ENCODE measurements at regions of chr3 and their contacts with region 1.

Region 1: DNA sequence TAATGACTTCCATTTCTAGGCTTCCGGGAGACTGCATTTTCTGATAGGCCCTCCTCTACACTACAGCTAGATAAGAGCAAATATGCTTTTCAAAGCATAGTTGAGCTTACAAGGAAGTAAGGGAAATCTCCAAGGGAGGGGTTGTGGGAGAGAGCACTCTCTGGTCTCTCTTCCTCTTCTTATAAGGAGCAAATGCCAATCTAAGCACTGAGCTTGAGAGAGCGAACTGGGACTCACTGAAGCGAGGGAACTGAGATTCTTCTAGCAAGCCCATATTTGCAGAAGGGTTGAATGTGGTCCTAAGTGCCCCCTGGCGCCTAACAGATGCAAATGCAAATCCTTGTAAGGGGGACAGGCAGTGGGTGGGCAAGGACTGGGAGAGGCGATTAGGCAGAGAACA is 164.8 kb downstream of the ERC2 start:
- DNase-seq: peak; percentile 61 to 79
- H3K4me3 ChIP-seq: no peak overlapping the region
- H3K27ac ChIP-seq: no peak overlapping the region
- H3K4me1 ChIP-seq: peaks cover 1 to 13% (median 8%) of the 10 kb centered on the region in 4 experiments; a peak in 4 of 7 replicates
- H3K27me3 ChIP-seq: no peaks in the 10 kb centered on the region
- CTCF ChIP-seq: peak; percentile 65 to 81 (median 78)
- EP300 ChIP-seq: no peak
- POLR2A ChIP-seq: no peak
- RAD21 ChIP-seq: peak; percentile 75 to 84

Region 2: GRCh38 chr3:56089739-56090138 is 213.7 kb before region 1 on chr3:
- CTCF ChIA-PET with region 1: interaction called, 12 read pairs
- POLR2A ChIA-PET with region 1: no interaction called
- DNase-seq: no peak
- H3K4me3 ChIP-seq: no peak overlapping the region
- H3K27ac ChIP-seq: no peak overlapping the region
- H3K4me1 ChIP-seq: no peaks in the 10 kb centered on the region
- H3K27me3 ChIP-seq: no peaks in the 10 kb centered on the region
- CTCF ChIP-seq: peak in 2 of 3 experiments; percentile 23 to 32; a peak in 2 of 4 replicates
- EP300 ChIP-seq: no peak
- POLR2A ChIP-seq: no peak
- RAD21 ChIP-seq: peak; percentile 41 to 66

Region 3: DNA sequence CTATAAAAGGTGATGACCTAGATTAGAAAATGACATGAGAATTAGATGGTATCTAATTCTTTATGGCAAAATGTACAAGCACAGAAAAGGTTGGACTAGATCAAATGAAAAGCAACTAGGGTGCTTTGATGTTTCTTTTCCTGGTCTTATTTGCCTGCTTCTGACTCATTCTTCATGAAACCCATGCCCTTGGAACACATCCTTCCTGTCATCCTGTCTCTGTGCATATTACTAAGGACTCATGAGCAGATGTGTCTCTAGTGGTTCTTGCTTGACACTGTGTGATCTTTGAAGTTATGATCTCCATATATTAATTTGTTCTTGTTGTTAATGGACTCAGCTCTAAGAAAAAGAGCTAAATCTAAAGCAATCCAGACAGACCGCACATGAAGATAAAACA is 149.2 kb before region 1 on chr3:
- CTCF ChIA-PET with region 1: no interaction called
- POLR2A ChIA-PET with region 1: no interaction called
- DNase-seq: no peak
- H3K4me3 ChIP-seq: no peak overlapping the region
- H3K27ac ChIP-seq: no peak overlapping the region
- H3K4me1 ChIP-seq: peaks cover 0 to 7% (median 3%) of the 10 kb centered on the region in 4 experiments; a peak in 3 of 7 replicates
- H3K27me3 ChIP-seq: no peaks in the 10 kb centered on the region
- CTCF ChIP-seq: no peak
- EP300 ChIP-seq: no peak
- POLR2A ChIP-seq: no peak
- RAD21 ChIP-seq: no peak

Region 4: DNA sequence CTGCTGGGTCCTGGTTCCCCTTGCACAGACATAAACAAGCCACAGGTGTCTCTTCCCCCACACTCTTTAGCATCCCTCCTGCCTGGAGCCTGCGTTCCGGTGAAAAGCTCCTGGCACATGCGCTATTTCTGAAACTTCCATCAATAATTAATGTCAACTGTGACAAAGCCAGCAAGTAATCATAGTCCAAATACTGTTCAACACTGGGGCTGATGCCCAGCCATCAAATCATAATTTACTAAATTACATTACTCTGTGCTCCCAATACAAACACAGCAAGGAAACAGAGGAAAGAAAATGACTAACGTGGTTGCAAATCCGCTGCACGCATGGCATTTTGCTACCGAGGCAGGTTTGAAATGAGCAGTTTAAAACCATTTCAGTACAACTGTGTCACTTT is 129.9 kb before region 1 on chr3:
- CTCF ChIA-PET with region 1: no interaction called
- POLR2A ChIA-PET with region 1: no interaction called
- DNase-seq: no peak
- H3K4me3 ChIP-seq: no peak overlapping the region
- H3K27ac ChIP-seq: no peak overlapping the region
- H3K4me1 ChIP-seq: no peaks in the 10 kb centered on the region
- H3K27me3 ChIP-seq: no peaks in the 10 kb centered on the region
- CTCF ChIP-seq: no peak
- EP300 ChIP-seq: no peak
- POLR2A ChIP-seq: no peak
- RAD21 ChIP-seq: no peak

Region 5: GRCh38 chr3:56260262-56260661 is 43.2 kb before region 1 on chr3:
- CTCF ChIA-PET with region 1: interaction called, 44 read pairs
- POLR2A ChIA-PET with region 1: no interaction called
- DNase-seq: peak in 1 of 2 experiments; percentile 62
- H3K4me3 ChIP-seq: no peak overlapping the region
- H3K27ac ChIP-seq: no peak overlapping the region
- H3K4me1 ChIP-seq: peaks cover 0 to 4% (median 0%) of the 10 kb centered on the region in 4 experiments; a peak in 1 of 7 replicates
- H3K27me3 ChIP-seq: no peaks in the 10 kb centered on the region
- CTCF ChIP-seq: peak in 2 of 3 experiments; percentile 23 to 42; a peak in 3 of 4 replicates
- EP300 ChIP-seq: no peak
- POLR2A ChIP-seq: no peak
- RAD21 ChIP-seq: peak in 1 of 2 experiments; percentile 36; a peak in 3 of 4 replicates

Region 6: DNA sequence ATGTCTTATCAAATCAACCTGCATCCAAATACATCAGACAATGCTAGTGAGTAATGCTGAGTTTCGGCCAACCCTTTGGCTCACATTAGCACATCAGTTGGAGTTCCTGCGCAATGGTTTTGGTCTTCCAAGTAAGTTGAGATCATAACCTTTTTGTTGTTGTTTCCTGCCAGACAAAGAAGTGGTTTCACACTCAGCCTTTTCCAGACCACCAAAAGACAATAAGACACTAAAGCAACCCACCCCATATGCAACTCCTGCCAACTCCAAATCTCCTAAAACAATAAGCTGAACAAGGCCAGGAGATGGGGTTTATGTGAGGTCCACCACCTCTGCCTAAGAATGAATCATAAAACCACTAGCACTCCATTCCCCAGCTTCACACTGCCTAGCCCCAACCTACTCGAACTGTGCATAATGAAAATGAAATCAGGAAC is 12.2 kb before region 1 on chr3:
- CTCF ChIA-PET with region 1: interaction called, 42 read pairs
- POLR2A ChIA-PET with region 1: no interaction called
- DNase-seq: no peak
- H3K4me3 ChIP-seq: no peak overlapping the region
- H3K27ac ChIP-seq: no peak overlapping the region
- H3K4me1 ChIP-seq: peaks cover 3 to 17% (median 13%) of the 10 kb centered on the region in 4 experiments
- H3K27me3 ChIP-seq: no peaks in the 10 kb centered on the region
- CTCF ChIP-seq: no peak
- EP300 ChIP-seq: no peak
- POLR2A ChIP-seq: no peak
- RAD21 ChIP-seq: no peak

Region 7: DNA sequence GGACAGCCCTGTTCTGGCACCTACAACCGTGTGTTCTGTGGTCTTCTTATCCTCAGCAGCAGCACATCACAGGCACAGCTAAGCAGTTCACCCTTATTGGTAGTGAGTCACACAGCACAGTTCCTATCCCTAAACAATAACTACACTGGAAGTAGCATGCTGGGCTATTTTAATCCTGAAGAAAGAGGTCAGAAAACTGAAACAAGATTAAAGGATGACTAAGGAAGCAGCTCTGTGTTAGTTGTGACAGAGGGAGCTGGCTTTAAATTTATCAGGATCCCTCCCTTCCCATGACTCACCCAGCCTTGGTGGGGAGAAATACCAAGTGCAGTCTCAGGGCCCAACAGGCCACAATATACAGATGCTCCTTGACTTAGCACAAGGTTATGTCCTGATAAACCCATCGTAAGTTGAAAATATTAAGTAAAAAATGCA is 20.5 kb after region 1 on chr3:
- CTCF ChIA-PET with region 1: interaction called, 17 read pairs
- POLR2A ChIA-PET with region 1: no interaction called
- DNase-seq: no peak
- H3K4me3 ChIP-seq: no peak overlapping the region
- H3K27ac ChIP-seq: no peak overlapping the region
- H3K4me1 ChIP-seq: peaks cover 2 to 9% (median 6%) of the 10 kb centered on the region in 4 experiments; a peak in 5 of 7 replicates
- H3K27me3 ChIP-seq: no peaks in the 10 kb centered on the region
- CTCF ChIP-seq: no peak
- EP300 ChIP-seq: no peak
- POLR2A ChIP-seq: no peak
- RAD21 ChIP-seq: no peak

Region 8: DNA sequence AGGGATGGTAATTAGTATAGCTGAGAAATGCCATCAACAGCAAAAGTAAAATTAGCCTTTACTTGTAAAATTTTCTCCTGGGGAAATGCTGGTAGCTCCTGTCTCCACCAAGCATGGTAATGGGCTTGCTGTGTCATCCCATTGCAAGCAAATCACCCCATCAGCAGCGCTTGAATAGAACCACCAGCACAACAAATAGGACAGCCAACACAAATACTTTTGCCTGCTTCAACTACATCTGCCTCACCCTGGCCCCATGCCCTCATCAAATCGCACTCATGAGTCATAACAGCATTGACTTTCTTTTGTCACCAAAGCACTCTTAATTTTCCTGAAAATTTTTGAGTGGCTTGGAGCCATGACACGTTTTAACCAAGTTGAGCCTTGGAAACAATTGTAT is 112.2 kb after region 1 on chr3:
- CTCF ChIA-PET with region 1: no interaction called
- POLR2A ChIA-PET with region 1: no interaction called
- DNase-seq: no peak
- H3K4me3 ChIP-seq: no peak overlapping the region
- H3K27ac ChIP-seq: no peak overlapping the region
- H3K4me1 ChIP-seq: peaks cover 0 to 6% (median 1%) of the 10 kb centered on the region in 4 experiments; a peak in 3 of 7 replicates
- H3K27me3 ChIP-seq: no peaks in the 10 kb centered on the region
- CTCF ChIP-seq: no peak
- EP300 ChIP-seq: no peak
- POLR2A ChIP-seq: no peak
- RAD21 ChIP-seq: no peak

Region 9: GRCh38 chr3:56525291-56525690 is 221.8 kb after region 1 on chr3:
- CTCF ChIA-PET with region 1: no interaction called
- POLR2A ChIA-PET with region 1: no interaction called
- DNase-seq: no peak
- H3K4me3 ChIP-seq: no peak overlapping the region
- H3K27ac ChIP-seq: no peak overlapping the region
- H3K4me1 ChIP-seq: peaks cover 0 to 4% (median 2%) of the 10 kb centered on the region in 4 experiments
- H3K27me3 ChIP-seq: no peaks in the 10 kb centered on the region
- CTCF ChIP-seq: no peak
- EP300 ChIP-seq: no peak
- POLR2A ChIP-seq: no peak
- RAD21 ChIP-seq: no peak

Measured in H1 (cell line).